ENCODE measurements at regions of chr12 and their contacts with region 1.

Region 1: DNA sequence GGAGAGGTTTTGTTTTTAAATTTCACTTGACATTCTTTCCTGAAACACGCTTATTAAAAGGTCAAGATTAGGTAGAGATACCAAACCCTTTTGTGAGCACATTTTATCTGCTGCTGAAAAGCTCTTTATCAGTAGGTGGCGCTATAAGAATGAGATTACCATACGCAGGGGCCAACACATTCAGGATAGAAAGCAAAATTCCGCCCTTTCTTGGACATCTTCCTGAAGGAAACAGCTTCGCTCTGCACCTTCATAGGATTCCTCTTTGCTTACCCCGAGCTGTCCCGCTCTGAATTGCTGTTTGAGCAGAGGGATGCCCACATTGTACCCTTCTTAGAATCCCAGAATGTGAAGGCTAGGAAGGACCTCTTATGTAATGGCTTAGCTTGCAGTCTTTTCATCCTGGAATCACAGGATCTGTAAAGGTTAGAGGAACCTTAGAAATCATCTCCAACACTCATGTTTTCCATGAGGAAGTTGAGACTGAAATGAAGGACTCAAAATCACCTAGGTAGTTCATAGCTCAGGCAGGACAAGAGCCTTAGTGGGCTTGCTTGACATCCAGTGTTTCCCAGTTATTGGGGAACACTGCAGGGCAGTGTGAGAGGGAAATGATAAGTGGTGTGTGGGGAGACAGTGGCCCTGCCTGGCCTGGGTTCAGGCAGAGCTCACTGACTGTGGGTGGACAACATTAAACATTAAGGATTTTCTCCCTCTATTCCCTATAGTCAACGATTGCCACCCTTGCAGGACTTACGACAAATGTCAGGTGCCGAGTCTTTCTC is 38.7 kb upstream of the CRY1 start:
- DNase-seq: peak; percentile 11
- H3K4me3 Mint-ChIP-seq: no peak overlapping the region
- H3K27ac Mint-ChIP-seq: no peak overlapping the region
- H3K4me1 Mint-ChIP-seq: no peaks in the 10 kb centered on the region
- H3K27me3 Mint-ChIP-seq: no peaks in the 10 kb centered on the region

Region 2: DNA sequence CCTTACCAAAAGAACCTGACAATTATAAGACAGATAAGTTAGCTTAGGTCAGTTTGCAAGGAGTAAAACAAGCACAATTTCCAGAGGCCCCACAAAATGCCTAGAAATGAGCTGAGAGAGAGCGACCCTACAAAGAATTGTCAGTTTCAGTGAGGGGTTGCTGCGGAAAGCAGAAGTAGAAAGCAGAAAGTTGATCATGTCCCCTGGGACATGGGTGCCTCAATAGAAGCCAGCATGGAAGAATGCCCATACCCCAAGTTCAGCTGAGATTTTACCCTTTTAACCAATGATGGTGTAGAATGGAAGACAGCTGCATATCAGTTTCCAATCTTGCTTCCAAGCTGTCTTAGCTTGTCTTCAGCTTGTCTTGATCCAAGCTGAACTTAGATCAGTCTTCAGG is 16.9 kb before region 1 on chr12:
- CTCF ChIA-PET with region 1: interaction called, 24 read pairs
- POLR2A ChIA-PET with region 1: no interaction called
- intact Hi-C with region 1: no loop called
- DNase-seq: no peak
- H3K4me3 Mint-ChIP-seq: no peak overlapping the region
- H3K27ac Mint-ChIP-seq: no peak overlapping the region
- H3K4me1 Mint-ChIP-seq: no peaks in the 10 kb centered on the region
- H3K27me3 Mint-ChIP-seq: peaks cover 11% of the 10 kb centered on the region

Region 3: DNA sequence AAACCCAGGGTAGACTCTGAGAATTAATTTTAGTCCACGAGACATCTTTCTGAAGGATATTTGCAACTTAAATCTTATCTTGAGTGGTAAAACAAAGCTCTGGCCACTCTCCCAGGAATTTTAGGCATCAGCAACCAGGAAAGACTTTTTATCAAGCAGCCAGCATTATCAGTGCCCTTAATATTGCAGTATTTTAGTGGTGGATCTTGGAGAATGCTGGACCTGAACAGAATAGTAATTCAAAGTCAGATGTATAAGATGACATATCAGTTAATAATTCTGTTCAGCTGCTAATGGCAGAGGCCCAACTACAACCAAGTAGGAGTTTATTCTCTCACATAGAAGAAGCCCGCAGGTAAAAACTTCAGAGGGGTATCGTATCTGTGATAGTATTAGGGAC is 20.3 kb after region 1 on chr12:
- CTCF ChIA-PET with region 1: interaction called, 10 read pairs
- POLR2A ChIA-PET with region 1: no interaction called
- intact Hi-C with region 1: no loop called
- DNase-seq: no peak
- H3K4me3 Mint-ChIP-seq: no peak overlapping the region
- H3K27ac Mint-ChIP-seq: no peak overlapping the region
- H3K4me1 Mint-ChIP-seq: no peaks in the 10 kb centered on the region
- H3K27me3 Mint-ChIP-seq: peaks cover 10% of the 10 kb centered on the region

Region 4: DNA sequence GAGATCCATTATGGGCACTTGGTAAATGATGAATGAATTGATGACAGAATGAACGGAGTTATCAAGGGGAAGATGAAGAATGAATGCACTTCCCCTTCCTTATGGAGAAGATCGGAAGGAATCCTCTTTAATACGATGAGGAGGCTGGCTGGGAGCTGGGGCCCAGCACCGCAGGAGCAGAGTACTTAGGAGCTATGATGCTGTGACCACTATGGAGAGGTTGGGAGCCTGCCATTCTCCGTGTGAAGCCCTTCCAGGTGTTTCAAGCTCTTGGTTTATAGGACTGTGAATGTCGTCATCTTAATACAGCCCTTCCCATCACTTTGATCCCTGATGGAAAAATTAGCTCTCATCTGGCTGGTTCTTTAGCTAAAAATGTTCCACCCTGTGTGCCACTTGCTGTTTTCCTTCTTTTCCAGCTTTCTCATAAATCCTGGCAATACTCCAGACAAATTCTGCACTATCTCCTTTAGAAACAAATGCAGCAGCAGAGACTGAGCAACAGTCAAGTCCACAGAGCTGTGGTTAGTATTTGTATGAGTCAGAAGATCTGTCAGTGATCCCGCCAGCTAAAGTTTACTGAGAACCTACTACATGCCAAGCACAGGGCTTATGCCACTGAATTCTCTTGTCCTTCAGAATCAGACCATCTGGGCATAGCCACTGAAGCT is 224.4 kb after region 1 on chr12:
- CTCF ChIA-PET with region 1: interaction called, 10 read pairs
- POLR2A ChIA-PET with region 1: no interaction called
- intact Hi-C with region 1: no loop called
- DNase-seq: no peak
- H3K4me3 Mint-ChIP-seq: no peak overlapping the region
- H3K27ac Mint-ChIP-seq: no peak overlapping the region
- H3K4me1 Mint-ChIP-seq: peaks cover 34% of the 10 kb centered on the region
- H3K27me3 Mint-ChIP-seq: no peaks in the 10 kb centered on the region

Region 5: GRCh38 chr12:107441665-107442300 is 309.8 kb after region 1 on chr12:
- CTCF ChIA-PET with region 1: no interaction called
- POLR2A ChIA-PET with region 1: no interaction called
- intact Hi-C with region 1: no loop called
- DNase-seq: peak; percentile 10
- H3K4me3 Mint-ChIP-seq: peak overlapping the region; percentile 23
- H3K27ac Mint-ChIP-seq: no peak overlapping the region
- H3K4me1 Mint-ChIP-seq: peaks cover 14% of the 10 kb centered on the region
- H3K27me3 Mint-ChIP-seq: no peaks in the 10 kb centered on the region

Region 6: DNA sequence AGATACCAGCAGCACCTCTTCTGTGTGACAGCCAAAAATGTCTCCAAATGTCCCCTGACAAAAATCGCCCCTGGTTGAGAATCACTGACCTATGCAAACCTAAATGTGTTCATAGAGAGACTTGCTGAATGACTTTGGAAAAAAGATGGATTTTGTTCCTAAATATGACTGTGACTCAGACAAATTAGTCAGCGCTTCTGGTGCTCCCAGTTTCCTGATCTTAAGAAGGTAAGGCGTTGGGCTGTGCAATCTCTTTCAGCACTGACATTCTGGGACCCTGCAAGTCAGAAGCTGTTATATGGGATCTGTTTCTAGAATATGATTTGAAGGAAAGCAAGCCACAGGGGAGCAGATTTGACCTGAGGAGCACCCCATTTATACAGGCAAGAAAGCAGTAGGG is 463.0 kb after region 1 on chr12:
- CTCF ChIA-PET with region 1: interaction called, 15 read pairs
- POLR2A ChIA-PET with region 1: no interaction called
- intact Hi-C with region 1: no loop called
- DNase-seq: no peak
- H3K4me3 Mint-ChIP-seq: no peak overlapping the region
- H3K27ac Mint-ChIP-seq: no peak overlapping the region
- H3K4me1 Mint-ChIP-seq: no peaks in the 10 kb centered on the region
- H3K27me3 Mint-ChIP-seq: no peaks in the 10 kb centered on the region

Region 7: GRCh38 chr12:107622005-107622404 is 490.0 kb after region 1 on chr12:
- CTCF ChIA-PET with region 1: interaction called, 341 read pairs
- POLR2A ChIA-PET with region 1: no interaction called
- intact Hi-C with region 1: no loop called
- DNase-seq: no peak
- H3K4me3 Mint-ChIP-seq: no peak overlapping the region
- H3K27ac Mint-ChIP-seq: no peak overlapping the region
- H3K4me1 Mint-ChIP-seq: no peaks in the 10 kb centered on the region
- H3K27me3 Mint-ChIP-seq: no peaks in the 10 kb centered on the region